ENCODE measurements at regions of chr16 and their contacts with region 1.

Region 1: GRCh38 chr16:56102183-56102686 is 89.1 kb upstream of the GNAO1 start:
- DNase-seq: peak in 9 of 10 donors; percentile 16 to 90 (median 39)

Region 2: DNA sequence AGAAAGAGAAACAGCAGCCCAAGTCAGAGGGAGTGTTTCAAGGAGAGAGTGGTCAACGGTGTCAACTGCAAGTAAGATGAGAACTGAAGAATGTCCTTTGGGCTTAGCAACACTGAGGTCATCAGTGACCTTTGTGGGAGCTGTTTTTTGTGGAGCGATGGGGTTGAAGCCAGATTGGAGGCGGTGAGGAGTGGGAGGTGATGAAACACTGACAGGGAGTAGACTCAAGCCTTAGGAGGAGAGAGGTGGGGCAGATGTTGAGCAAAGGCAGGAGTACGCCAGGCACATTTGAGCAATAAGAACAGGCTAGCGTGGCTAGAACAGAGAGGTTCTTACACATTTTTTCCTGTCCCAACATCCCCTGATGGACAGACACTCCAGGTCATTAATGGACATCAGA is 14.6 kb before region 1 on chr16:
- intact Hi-C with region 1: no loop called
- DNase-seq: no peak

Region 3: DNA sequence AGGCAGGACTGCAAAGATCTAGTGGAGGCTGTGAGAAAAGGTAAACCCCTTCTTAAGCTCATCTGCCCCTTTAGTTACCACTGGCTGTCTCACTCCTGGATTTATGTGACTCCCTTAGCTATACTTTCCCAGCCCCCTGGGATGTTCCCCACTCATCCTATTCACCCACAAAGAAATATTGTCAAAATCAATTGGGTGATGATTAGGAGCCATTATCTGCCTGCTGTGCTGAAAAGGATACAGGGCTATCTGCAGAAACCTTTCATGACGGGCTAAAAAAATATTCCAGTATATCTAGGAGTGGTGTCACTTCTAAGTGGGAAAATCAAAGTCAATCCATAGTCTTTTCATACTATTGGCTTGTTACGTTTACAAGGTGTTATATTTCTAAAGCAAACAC is 81.0 kb after region 1 on chr16:
- intact Hi-C with region 1: loop called (anchors 10 kb)
- DNase-seq: no peak

Region 4: GRCh38 chr16:56246051-56246817 is 144.0 kb after region 1 on chr16:
- intact Hi-C with region 1: loop called (anchors 10 kb)
- DNase-seq: peak in 9 of 10 donors; percentile 59 to 97 (median 79)

Measured in posterior cingulate gyrus (tissue), 11 donors.